Transverse colon (tissue), 4 donors: ENCODE measurements at regions of chr4 and their contacts with region 1.

Region 1: GRCh38 chr4:115851918-115852766 is 738.7 kb upstream of the NDST4 start:
- DNase-seq: peak; percentile 35
- H3K4me3 ChIP-seq: no peak overlapping the region
- H3K27ac ChIP-seq: no peak overlapping the region
- H3K4me1 ChIP-seq: no peaks in the 10 kb centered on the region
- H3K27me3 ChIP-seq: no peaks in the 10 kb centered on the region
- CTCF ChIP-seq: peak in 4 of 5 experiments; percentile 44 to 57 (median 50)
- EP300 ChIP-seq: no peak
- POLR2A ChIP-seq: no peak

Region 2: DNA sequence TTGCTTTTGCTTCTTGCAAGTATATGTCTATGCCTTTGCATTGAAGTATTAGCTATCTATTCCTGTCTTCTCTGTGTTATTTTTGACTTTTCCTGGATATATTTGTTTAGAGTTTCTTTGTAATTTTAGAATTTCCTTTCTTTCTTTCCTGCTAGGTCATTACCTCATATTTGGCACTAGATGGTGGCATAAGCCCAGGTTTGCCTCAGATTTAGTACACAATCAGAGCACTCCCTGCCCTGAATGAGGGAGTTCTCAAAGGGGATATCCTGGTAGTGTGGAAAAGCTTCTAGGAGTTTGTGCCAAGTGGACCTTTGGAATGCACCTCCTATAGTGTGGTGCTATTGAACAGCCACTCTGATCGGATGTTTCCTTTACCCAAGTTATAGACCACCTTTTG is 1071.9 kb before region 1 on chr4:
- in situ Hi-C with region 1: loop called in 1 of 4 experiments (anchors 25 kb)
- intact Hi-C with region 1: no loop called
- DNase-seq: no peak
- H3K4me3 ChIP-seq: no peak overlapping the region
- H3K27ac ChIP-seq: no peak overlapping the region
- H3K4me1 ChIP-seq: no peaks in the 10 kb centered on the region
- H3K27me3 ChIP-seq: no peaks in the 10 kb centered on the region
- CTCF ChIP-seq: peak in 3 of 5 experiments; percentile 23 to 26 (median 24)
- EP300 ChIP-seq: no peak
- POLR2A ChIP-seq: no peak

Region 3: GRCh38 chr4:115090483-115091075 is 761.6 kb before region 1 on chr4:
- in situ Hi-C with region 1: loop called in 2 of 4 experiments (anchors 25 kb)
- intact Hi-C with region 1: no loop called
- DNase-seq: no peak
- H3K4me3 ChIP-seq: no peak overlapping the region
- H3K27ac ChIP-seq: no peak overlapping the region
- H3K4me1 ChIP-seq: no peaks in the 10 kb centered on the region
- H3K27me3 ChIP-seq: no peaks in the 10 kb centered on the region
- CTCF ChIP-seq: peak; percentile 43 to 61 (median 46)
- EP300 ChIP-seq: no peak
- POLR2A ChIP-seq: no peak

Region 4: GRCh38 chr4:115113125-115114106 is 738.7 kb before region 1 on chr4 and contains the start of gene NDST4:
- in situ Hi-C with region 1: loop called in 1 of 4 experiments (anchors 25 kb)
- intact Hi-C with region 1: no loop called
- DNase-seq: no peak
- H3K4me3 ChIP-seq: peak within 1 kb of the TSS in 1 of 4 donors; percentile 15
- H3K27ac ChIP-seq: no peak within 1 kb of the TSS
- H3K4me1 ChIP-seq: peaks cover 0 to 20% (median 0%) of the 10 kb centered on the region in 4 donors
- H3K27me3 ChIP-seq: no peaks in the 10 kb centered on the region
- CTCF ChIP-seq: no peak
- EP300 ChIP-seq: no peak
- POLR2A ChIP-seq: no peak
- total RNA-seq, gene NDST4: 0.14 TPM in 1 of 4 donors, not detected in the others

Region 5: DNA sequence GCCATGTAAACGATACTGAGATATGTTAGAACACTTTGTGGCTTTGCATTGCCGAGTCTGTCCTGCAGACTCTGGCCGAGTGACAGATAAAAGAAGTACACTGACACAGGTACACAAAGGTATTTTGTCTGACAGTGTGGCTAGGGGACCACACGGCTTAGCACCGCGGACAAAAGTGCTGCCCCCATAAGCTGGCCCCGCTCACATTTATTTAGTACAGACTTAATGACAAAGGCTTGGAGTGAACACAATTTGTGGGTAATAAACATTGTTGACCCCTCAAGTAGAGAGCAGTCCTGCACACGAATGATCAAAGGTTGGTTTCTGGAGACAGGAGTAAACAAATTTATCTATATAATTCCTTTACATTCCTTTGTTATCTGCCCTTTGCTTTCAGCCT is 256.5 kb after region 1 on chr4:
- in situ Hi-C with region 1: no loop called
- intact Hi-C with region 1: no loop called
- DNase-seq: no peak
- H3K4me3 ChIP-seq: no peak overlapping the region
- H3K27ac ChIP-seq: no peak overlapping the region
- H3K4me1 ChIP-seq: no peaks in the 10 kb centered on the region
- H3K27me3 ChIP-seq: no peaks in the 10 kb centered on the region
- CTCF ChIP-seq: no peak
- EP300 ChIP-seq: no peak
- POLR2A ChIP-seq: no peak